ENCODE measurements at regions of chr6 and their contacts with region 1.

Region 1: GRCh38 chr6:14210663-14211561 is 93.3 kb downstream of the CD83 start:
- DNase-seq: peak; percentile 90
- ATAC-seq: peak; percentile 98
- H3K4me3 ChIP-seq: peak overlapping the region; percentile 72
- H3K27ac ChIP-seq: peak overlapping the region; percentile 94
- H3K4me1 ChIP-seq: peaks cover 6% of the 10 kb centered on the region; the same call in 1 of the 2 replicates
- H3K27me3 ChIP-seq: no peaks in the 10 kb centered on the region
- CTCF ChIP-seq: peak; percentile 91
- POLR2A ChIP-seq: peak; percentile 75
- RAD21 ChIP-seq: peak; percentile 98

Region 2: GRCh38 chr6:14009431-14009830 is 201.5 kb before region 1 on chr6:
- CTCF ChIA-PET with region 1: no interaction called
- POLR2A ChIA-PET with region 1: no interaction called
- dilution Hi-C with region 1: no loop called
- in situ Hi-C with region 1: no loop called
- intact Hi-C with region 1: no loop called
- DNase-seq: no peak
- ATAC-seq: no peak
- H3K4me3 ChIP-seq: no peak overlapping the region
- H3K27ac ChIP-seq: no peak overlapping the region
- H3K4me1 ChIP-seq: no peaks in the 10 kb centered on the region
- H3K27me3 ChIP-seq: peaks cover 4% of the 10 kb centered on the region; the same call in 1 of the 2 replicates
- CTCF ChIP-seq: no peak
- POLR2A ChIP-seq: no peak
- RAD21 ChIP-seq: no peak

Region 3: DNA sequence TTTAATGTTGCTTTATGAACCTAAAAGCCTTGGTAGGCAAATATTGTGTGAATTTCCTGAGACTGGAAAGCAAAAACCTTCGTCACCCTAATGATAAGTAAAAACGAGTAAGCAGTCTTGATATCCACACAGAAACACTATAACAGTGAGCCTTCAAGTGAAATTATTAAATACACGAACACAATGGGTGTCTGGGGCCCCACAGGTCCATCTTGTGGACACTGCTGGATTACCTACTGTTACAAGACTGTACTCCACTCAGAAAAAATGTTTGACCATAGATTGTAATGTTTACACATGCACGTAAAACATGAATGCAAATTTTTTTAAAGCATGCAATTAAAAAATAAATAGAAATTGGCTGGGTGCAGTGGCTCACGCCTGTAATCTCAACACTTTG is 373.5 kb after region 1 on chr6:
- CTCF ChIA-PET with region 1: no interaction called
- POLR2A ChIA-PET with region 1: no interaction called
- dilution Hi-C with region 1: no loop called
- in situ Hi-C with region 1: no loop called
- intact Hi-C with region 1: loop called (anchors 10 kb)
- DNase-seq: peak; percentile 22
- ATAC-seq: no peak
- H3K4me3 ChIP-seq: no peak overlapping the region
- H3K27ac ChIP-seq: no peak overlapping the region
- H3K4me1 ChIP-seq: no peaks in the 10 kb centered on the region
- H3K27me3 ChIP-seq: peaks cover 6% of the 10 kb centered on the region
- CTCF ChIP-seq: no peak
- POLR2A ChIP-seq: no peak
- RAD21 ChIP-seq: peak; percentile 21; the same call in 1 of the 2 replicates

Region 4: DNA sequence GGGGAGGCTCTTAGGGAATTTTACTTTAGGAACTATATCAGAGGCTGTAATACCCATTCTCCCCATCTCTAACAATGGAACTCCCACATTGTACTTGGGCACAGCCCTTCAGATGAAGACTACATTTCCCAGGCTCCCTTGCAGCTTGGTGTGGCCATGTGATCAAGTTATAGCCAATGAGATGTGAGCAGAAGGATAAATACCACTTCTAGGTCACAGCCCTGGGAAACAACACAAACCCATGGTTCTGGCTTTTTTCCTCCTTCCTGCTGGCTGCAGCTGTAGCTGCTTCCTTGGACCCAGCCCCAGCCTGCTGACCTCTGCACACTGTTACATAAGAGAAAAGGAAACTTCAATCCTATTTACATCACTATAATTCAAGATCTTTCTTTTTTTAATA is 589.0 kb after region 1 on chr6:
- CTCF ChIA-PET with region 1: no interaction called
- POLR2A ChIA-PET with region 1: no interaction called
- dilution Hi-C with region 1: no loop called
- in situ Hi-C with region 1: no loop called
- intact Hi-C with region 1: loop called (anchors 10 kb)
- DNase-seq: peak; percentile 81
- ATAC-seq: peak; percentile 80
- H3K4me3 ChIP-seq: no peak overlapping the region
- H3K27ac ChIP-seq: no peak overlapping the region
- H3K4me1 ChIP-seq: peaks cover 10% of the 10 kb centered on the region
- H3K27me3 ChIP-seq: no peaks in the 10 kb centered on the region
- CTCF ChIP-seq: no peak
- POLR2A ChIP-seq: no peak
- RAD21 ChIP-seq: no peak

Region 5: GRCh38 chr6:14881398-14881797 is 670.5 kb after region 1 on chr6:
- CTCF ChIA-PET with region 1: no interaction called
- POLR2A ChIA-PET with region 1: no interaction called
- dilution Hi-C with region 1: no loop called
- in situ Hi-C with region 1: no loop called
- intact Hi-C with region 1: no loop called
- DNase-seq: peak; percentile 87
- ATAC-seq: peak; percentile 56
- H3K4me3 ChIP-seq: no peak overlapping the region
- H3K27ac ChIP-seq: no peak overlapping the region
- H3K4me1 ChIP-seq: peaks cover 28% of the 10 kb centered on the region
- H3K27me3 ChIP-seq: no peaks in the 10 kb centered on the region
- CTCF ChIP-seq: no peak
- POLR2A ChIP-seq: no peak
- RAD21 ChIP-seq: no peak; the same call in 1 of the 2 replicates

Region 6: DNA sequence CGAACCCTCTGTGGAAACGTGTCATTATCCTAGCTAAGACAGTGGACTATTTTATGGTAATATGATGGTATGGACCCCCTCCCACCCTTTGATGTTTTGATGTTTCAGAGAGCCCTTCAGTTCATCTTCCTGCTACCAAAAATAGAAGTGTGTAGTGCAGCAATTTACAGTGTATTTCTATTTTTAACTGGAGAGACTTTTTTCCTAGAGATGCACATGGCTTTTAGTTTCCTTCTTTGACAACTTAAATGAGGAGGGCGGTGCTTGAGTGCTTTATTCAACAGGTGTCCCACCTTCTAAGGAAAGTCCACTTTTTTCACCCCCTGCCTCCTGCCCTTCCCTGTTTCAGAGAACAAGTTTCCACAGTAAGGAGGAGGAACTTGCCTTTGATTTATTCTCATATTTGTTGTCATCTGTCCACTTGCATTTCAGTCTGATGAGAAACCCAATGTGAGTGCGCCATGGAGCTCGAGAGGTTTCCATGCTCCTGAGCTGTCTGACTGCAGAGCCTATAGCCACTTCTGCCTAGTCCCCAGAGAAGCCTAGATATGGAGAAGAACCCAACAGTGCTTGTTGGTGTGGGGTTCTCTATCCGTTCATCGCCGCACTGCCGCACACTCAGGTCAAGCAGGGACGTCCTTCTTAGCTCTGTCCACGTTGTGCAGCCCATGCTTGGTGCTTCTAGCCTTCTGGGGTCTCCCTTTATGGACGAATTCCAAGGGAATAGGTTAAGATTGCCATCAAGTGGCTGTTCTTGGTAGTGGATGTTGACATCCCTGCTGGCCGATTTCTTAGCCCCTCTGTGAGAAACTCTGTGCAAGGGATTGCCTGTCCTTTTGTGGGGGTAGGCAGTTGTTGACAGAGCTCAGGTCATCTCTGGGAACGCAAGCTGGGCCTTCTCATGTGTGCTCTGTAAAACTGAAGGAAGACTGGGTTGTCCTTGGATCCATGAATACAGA is 1179.1 kb after region 1 on chr6:
- CTCF ChIA-PET with region 1: no interaction called
- POLR2A ChIA-PET with region 1: no interaction called
- dilution Hi-C with region 1: no loop called
- in situ Hi-C with region 1: loop called (anchors 10 kb)
- intact Hi-C with region 1: loop called (anchors 1 kb)
- DNase-seq: peak; percentile 66
- ATAC-seq: peak; percentile 73
- H3K4me3 ChIP-seq: no peak overlapping the region
- H3K27ac ChIP-seq: no peak overlapping the region
- H3K4me1 ChIP-seq: peaks cover 28% of the 10 kb centered on the region
- H3K27me3 ChIP-seq: no peaks in the 10 kb centered on the region
- CTCF ChIP-seq: peak; percentile 69
- POLR2A ChIP-seq: no peak
- RAD21 ChIP-seq: peak; percentile 86

Region 7: DNA sequence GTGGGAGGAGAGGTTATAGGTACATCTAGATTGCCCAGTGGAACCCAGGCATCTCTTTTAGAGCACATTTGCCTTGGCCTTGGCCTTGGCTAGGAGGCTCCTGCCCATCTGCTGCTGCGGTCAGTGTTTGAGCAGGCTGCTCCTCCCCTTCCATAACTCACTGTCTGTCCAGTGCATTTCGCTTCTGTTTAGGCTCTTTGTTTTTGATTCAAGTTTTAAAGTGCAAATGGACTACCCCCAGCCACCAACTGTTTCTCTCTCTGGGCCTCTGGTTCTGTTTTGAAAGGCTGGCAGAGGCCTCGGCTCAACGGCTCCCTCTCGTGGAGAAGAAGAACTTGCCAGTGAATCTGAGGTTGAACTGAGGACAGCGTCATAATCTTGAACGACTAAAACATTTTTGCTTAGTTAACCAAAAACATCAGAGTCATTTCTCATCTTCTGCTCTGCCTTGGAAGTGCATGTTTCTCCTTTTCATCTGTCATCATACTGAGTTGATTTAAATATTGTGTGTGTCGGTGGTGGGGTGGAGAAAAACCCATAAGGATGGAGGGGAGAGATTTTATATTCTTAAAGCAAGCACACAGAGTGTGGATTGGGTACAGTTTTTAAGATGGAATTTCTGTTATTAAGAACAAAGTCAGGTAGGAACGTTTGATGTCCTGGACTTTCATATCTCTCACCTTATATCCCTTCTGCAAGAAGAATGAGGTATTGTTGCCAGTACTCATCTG is 1280.5 kb after region 1 on chr6:
- CTCF ChIA-PET with region 1: no interaction called
- POLR2A ChIA-PET with region 1: no interaction called
- dilution Hi-C with region 1: no loop called
- in situ Hi-C with region 1: loop called (anchors 5 kb)
- intact Hi-C with region 1: loop called (anchors 2 kb)
- DNase-seq: peak; percentile 78
- ATAC-seq: peak; percentile 91
- H3K4me3 ChIP-seq: no peak overlapping the region
- H3K27ac ChIP-seq: peak overlapping the region; percentile 30; the same call in 1 of the 2 replicates
- H3K4me1 ChIP-seq: peaks cover 13% of the 10 kb centered on the region
- H3K27me3 ChIP-seq: no peaks in the 10 kb centered on the region
- CTCF ChIP-seq: peak; percentile 91
- POLR2A ChIP-seq: no peak
- RAD21 ChIP-seq: peak; percentile 90

Measured in IMR-90 (cell line).